CD4-positive, alpha-beta memory T cell (primary cell): ENCODE measurements at regions of chr15 and their contacts with region 1.

Region 1: GRCh38 chr15:92989470-92989869 is 89.3 kb downstream of the CHD2 start:
- DNase-seq: no peak
- H3K4me3 ChIP-seq: no peak overlapping the region
- H3K4me3 Mint-ChIP-seq: peak overlapping the region in 1 of 8 donors; percentile 1
- H3K27ac ChIP-seq: no peak overlapping the region
- H3K27ac Mint-ChIP-seq: peak overlapping the region in 6 of 7 donors; percentile 3 to 81 (median 38)
- H3K4me1 ChIP-seq: no peaks in the 10 kb centered on the region
- H3K4me1 Mint-ChIP-seq: peaks cover 11 to 23% (median 18%) of the 10 kb centered on the region in 4 donors
- H3K27me3 ChIP-seq: no peaks in the 10 kb centered on the region
- H3K27me3 Mint-ChIP-seq: no peaks in the 10 kb centered on the region

Region 2: DNA sequence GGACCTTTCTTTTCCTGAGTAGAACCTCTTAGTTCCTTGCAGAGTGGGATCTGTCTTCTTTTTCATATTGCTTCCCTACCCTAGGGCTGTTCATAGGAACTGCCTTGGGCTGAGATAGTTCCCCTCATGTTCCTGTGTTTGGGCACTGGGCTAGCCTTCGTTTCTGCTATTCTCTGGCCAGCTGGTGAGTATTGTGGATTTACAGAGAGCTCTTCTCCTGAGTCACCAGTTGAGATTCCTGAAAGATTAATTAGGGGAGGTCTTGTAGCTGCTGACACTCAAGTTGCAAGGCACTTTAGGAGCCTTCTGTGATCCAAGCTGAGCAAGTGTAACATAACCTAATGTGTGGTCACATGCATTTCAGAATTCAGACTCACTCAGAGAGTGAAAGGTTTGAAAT is 58.7 kb before region 1 on chr15:
- CTCF ChIA-PET with region 1: no interaction called
- POLR2A ChIA-PET with region 1: no interaction called
- intact Hi-C with region 1: loop called (anchors 5 kb)
- DNase-seq: no peak
- H3K4me3 ChIP-seq: no peak overlapping the region
- H3K4me3 Mint-ChIP-seq: peak overlapping the region in 2 of 8 donors; percentile 10 to 25
- H3K27ac ChIP-seq: no peak overlapping the region
- H3K27ac Mint-ChIP-seq: peak overlapping the region in 4 of 7 donors; percentile 5 to 68 (median 40)
- H3K4me1 ChIP-seq: peaks cover 40% of the 10 kb centered on the region
- H3K4me1 Mint-ChIP-seq: peaks cover 33 to 69% (median 50%) of the 10 kb centered on the region in 4 donors
- H3K27me3 ChIP-seq: no peaks in the 10 kb centered on the region
- H3K27me3 Mint-ChIP-seq: no peaks in the 10 kb centered on the region